ENCODE measurements at regions of chr12 and their contacts with region 1.

Region 1: DNA sequence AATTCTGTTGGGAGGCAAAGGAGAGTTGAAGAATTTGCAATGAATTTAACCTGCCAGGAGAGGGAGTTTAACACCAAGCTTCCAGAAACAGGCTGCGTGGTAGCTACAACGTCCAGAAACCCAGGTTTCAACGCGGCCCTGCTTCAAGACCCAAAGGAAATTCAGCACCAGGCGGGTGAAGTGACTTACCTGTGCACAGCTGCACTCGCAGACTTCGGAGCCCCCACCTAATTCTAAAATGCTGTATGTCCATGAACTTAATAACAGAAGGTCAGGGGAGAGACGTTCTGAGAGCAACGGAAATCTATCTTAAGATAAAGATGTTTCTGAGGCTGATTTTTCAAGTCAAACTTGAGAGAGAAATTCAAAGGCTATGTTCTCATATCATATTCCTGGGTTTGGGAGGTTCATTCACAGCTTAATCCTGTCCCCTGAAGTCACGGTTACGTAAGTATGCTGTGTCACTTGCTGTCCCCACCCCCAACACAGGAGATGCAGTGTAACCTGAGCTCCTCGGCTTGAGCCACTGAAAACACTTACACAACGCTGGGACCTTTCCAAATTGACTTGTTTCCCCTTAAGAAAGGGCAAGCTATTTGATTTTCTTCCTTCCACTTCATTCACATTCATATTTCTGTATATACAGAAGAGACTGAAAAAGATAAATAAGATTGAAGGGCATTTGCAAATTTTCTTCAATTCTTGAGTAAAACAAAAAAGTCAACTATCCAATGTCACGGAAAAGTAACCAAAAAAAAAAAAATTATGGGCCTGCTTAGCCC is 22.7 kb downstream of the CLIP1 start:
- DNase-seq: peak; percentile 91 to 96
- ATAC-seq: peak; percentile 73 to 88
- H3K4me3 ChIP-seq: peak overlapping the region; percentile 39
- H3K27ac ChIP-seq: peak overlapping the region; percentile 98
- H3K4me1 ChIP-seq: peaks cover 72% of the 10 kb centered on the region
- CTCF ChIP-seq: peak; percentile 89
- EP300 ChIP-seq: peak in 1 of 2 experiments; percentile 39; a peak in 2 of 5 replicates
- POLR2A ChIP-seq: no peak
- RAD21 ChIP-seq: peak; percentile 95 to 97

Region 2: GRCh38 chr12:121590476-121591143 is 809.2 kb before region 1 on chr12:
- CTCF ChIA-PET with region 1: no interaction called
- POLR2A ChIA-PET with region 1: no interaction called
- DNase-seq: no peak
- ATAC-seq: peak; percentile 30 to 40; a peak in 3 of 6 replicates
- H3K4me3 ChIP-seq: no peak overlapping the region; the same call in 2 of the 3 replicates
- H3K27ac ChIP-seq: peak overlapping the region; percentile 38 to 85; a peak in 4 of 6 replicates
- H3K4me1 ChIP-seq: peaks cover 5% of the 10 kb centered on the region; the same call in 1 of the 3 replicates
- CTCF ChIP-seq: no peak
- EP300 ChIP-seq: no peak
- POLR2A ChIP-seq: no peak
- RAD21 ChIP-seq: no peak

Region 3: DNA sequence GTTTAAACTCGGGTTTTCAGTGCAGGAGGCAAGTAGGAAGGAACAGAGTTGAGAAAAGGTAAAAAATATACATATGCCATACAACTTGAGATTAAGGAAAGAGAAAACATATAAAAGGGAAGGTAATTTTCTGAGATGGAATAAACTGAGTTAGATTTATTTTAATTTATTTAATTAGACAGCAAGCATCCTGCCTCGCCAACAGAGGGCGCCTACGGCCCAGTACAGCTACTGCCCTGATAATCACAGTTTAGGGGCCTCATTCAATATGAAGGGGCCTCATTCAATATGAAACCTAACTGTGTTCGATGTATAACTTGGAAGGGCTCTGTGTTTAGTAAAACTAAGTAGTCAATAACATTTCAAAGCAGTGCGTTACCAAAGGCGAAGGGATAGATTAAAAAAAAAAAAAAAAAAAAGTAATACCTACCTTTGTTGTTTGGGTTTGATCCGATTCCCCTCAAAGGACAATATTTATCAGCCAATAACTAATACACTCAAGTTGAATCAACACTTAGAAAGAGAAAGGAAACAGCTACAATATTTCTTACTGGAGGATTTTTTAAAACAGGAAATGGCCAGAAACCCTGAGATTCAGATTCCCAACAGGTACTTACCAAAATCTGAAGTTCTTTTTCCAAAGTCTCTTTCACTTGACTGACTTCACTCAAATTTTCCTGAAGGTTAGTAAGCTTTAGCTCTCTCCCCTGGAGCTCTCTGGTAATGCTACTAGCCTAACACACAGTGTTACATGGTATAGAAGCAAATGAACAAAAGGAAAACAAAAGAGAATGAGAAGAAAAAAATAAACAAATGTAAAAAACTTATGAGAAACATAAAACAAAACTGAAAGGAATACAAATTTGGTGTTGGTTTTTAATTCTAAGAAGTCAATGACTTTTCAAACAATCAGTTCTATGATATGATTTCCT is 63.5 kb before region 1 on chr12:
- CTCF ChIA-PET with region 1: interaction called, 13 read pairs
- POLR2A ChIA-PET with region 1: no interaction called
- DNase-seq: peak; percentile 38 to 51
- ATAC-seq: peak in 1 of 2 experiments; percentile 80; a peak in 3 of 6 replicates
- H3K4me3 ChIP-seq: no peak overlapping the region
- H3K27ac ChIP-seq: no peak overlapping the region
- H3K4me1 ChIP-seq: no peaks in the 10 kb centered on the region; the same call in 2 of the 3 replicates
- CTCF ChIP-seq: peak; percentile 86
- EP300 ChIP-seq: no peak
- POLR2A ChIP-seq: no peak
- RAD21 ChIP-seq: peak; percentile 70 to 82

Region 4: GRCh38 chr12:122413516-122414404 is 14.0 kb after region 1 on chr12:
- CTCF ChIA-PET with region 1: interaction called, 49 read pairs
- POLR2A ChIA-PET with region 1: interaction called, 8 read pairs
- DNase-seq: no peak
- ATAC-seq: peak; percentile 47 to 54; a peak in 4 of 6 replicates
- H3K4me3 ChIP-seq: no peak overlapping the region
- H3K27ac ChIP-seq: peak overlapping the region; percentile 46 to 66
- H3K4me1 ChIP-seq: peaks cover 41% of the 10 kb centered on the region
- CTCF ChIP-seq: no peak
- EP300 ChIP-seq: no peak
- POLR2A ChIP-seq: no peak
- RAD21 ChIP-seq: no peak

Region 5: GRCh38 chr12:122427412-122427811 is 27.6 kb after region 1 on chr12:
- CTCF ChIA-PET with region 1: interaction called, 79 read pairs
- POLR2A ChIA-PET with region 1: interaction called, 55 read pairs
- DNase-seq: no peak
- ATAC-seq: no peak
- H3K4me3 ChIP-seq: no peak overlapping the region
- H3K27ac ChIP-seq: no peak overlapping the region
- H3K4me1 ChIP-seq: peaks cover 22% of the 10 kb centered on the region
- CTCF ChIP-seq: no peak
- EP300 ChIP-seq: no peak
- POLR2A ChIP-seq: no peak
- RAD21 ChIP-seq: no peak

Region 6: DNA sequence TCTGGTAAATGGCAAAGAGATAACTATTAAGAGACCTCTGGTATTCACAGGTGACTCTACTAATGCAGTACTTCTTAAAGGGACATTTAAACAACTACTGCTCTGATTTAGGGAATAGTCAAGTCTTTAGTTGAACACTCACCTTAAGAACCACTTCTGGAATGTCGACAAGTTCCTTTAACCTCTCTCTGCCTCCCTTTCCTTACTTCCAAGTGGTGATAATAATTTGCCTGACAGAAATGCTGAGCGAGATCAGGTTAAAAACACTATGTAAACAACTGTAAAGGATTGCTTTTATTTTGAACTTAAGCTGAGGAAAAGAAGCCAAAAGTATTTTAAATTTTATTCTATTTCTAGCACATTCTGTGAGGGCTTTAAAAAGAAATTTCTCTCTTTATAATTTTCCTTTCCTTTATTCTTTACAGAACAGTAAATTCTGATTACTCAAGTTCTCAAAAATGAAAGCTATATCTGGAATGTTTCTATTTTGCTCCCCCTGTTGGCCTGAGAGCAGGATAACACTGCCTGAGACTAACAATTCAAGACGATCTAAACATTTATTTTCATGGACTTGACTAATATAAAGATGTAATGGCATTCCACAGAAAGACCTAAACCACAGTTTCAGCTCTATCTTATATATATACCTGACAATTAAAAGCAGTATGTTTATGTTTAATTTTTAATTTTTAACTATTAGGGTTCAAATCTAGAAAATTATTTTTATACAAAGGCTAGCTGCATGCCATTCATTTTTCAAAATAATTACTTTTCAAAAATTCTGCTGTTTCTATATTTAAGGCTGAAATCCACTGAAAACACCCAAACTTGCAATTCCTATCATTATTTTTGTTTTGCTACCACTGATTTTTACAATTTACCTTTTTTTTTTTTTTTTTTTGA is 71.8 kb after region 1 on chr12:
- CTCF ChIA-PET with region 1: interaction called, 162 read pairs
- POLR2A ChIA-PET with region 1: interaction called, 31 read pairs
- DNase-seq: peak; percentile 29 to 83
- ATAC-seq: peak; percentile 75 to 77; a peak in 5 of 6 replicates
- H3K4me3 ChIP-seq: no peak overlapping the region; the same call in 2 of the 3 replicates
- H3K27ac ChIP-seq: peak overlapping the region; percentile 52 to 74
- H3K4me1 ChIP-seq: peaks cover 6% of the 10 kb centered on the region
- CTCF ChIP-seq: peak; percentile 84
- EP300 ChIP-seq: no peak
- POLR2A ChIP-seq: no peak
- RAD21 ChIP-seq: peak; percentile 83 to 87

Region 7: DNA sequence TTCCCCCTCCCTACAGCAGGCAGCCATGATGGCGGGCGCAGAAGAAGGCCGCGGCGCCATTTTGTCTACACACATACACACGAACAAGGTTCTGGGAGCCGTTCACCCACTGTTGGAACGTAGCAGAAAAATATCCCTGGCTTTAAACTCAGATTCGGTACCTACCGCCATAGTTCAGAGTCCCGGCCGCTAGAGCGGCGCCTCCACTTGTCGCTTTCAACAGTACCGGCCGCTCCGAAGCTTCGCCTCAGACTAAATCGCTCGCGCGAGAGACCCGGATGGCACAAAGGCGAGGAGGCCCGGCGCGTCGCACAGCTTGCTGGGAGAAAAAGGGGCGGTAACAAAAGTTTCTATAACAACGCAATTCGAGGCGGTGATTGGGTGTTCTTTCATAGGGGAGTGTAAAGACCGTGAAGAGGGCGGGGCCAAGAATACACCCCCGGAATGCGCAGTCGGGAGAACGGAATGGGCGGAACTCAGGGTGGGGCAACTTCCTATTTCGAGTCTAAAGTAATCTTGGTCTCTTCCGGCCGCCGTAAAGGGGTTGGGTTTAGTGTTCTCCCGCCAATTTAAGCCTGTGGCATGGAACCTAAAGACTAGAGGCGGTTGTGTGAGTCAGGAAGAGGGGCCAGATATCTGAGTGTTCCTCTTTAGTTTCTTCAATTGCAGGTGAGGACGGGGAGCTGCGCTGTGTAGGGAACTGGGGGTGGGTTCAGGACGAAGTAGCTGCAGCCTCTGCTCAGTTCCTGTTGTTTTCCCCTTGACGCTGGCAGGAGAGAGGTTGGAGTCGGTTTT is 127.1 kb after region 1 on chr12 and contains the starts of genes KNTC1 and RSRC2:
- CTCF ChIA-PET with region 1: interaction called, 8 read pairs
- POLR2A ChIA-PET with region 1: interaction called, 17 read pairs
- DNase-seq: peak; percentile 99 to 100
- ATAC-seq: peak; percentile 92 to 93
- H3K4me3 ChIP-seq: peak within 1 kb of the TSS; percentile 69
- H3K27ac ChIP-seq: peak within 1 kb of the TSS; percentile 95
- H3K4me1 ChIP-seq: peaks cover 28% of the 10 kb centered on the region
- CTCF ChIP-seq: no peak
- EP300 ChIP-seq: no peak
- POLR2A ChIP-seq: peak; percentile 92
- RAD21 ChIP-seq: peak in 1 of 2 experiments; percentile 3; a peak in 1 of 5 replicates
- polyA plus RNA-seq, gene KNTC1: 61.1 and 68.7 TPM in 2 replicates
- polyA plus RNA-seq, gene RSRC2: 43.0 and 83.3 TPM in 2 replicates